Upper lobe of right lung (tissue), 1 donor: ENCODE measurements at regions of chr11 and their contacts with region 1.

Region 1: DNA sequence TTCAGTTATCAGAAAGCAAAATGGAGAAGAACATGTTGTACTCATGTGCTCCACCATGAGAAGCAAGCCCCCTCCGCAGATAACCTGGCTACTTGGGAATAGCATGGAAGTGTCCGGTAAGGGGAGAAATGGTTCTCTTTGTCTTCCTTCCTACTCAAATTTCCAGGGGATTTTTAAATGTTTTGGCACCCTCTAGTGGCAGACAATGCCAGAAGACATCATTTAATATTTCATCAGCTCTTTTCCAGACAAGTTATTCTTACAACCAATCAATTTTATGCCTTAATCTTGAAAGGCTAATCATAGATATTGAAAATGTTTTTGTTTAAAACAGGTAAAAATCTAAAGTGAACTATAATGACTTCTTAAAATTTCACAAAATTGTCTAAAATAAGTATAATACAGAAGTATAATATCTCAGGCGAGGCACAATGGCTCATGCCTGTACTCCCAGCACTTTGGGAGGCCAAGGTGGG is 15.7 kb downstream of the CRTAM start:
- DNase-seq: no peak
- ATAC-seq: peak; percentile 57
- H3K4me3 ChIP-seq: no peak overlapping the region
- H3K27ac ChIP-seq: no peak overlapping the region
- H3K4me1 ChIP-seq: no peaks in the 10 kb centered on the region
- H3K27me3 ChIP-seq: no peaks in the 10 kb centered on the region
- CTCF ChIP-seq: peak; percentile 80

Region 2: DNA sequence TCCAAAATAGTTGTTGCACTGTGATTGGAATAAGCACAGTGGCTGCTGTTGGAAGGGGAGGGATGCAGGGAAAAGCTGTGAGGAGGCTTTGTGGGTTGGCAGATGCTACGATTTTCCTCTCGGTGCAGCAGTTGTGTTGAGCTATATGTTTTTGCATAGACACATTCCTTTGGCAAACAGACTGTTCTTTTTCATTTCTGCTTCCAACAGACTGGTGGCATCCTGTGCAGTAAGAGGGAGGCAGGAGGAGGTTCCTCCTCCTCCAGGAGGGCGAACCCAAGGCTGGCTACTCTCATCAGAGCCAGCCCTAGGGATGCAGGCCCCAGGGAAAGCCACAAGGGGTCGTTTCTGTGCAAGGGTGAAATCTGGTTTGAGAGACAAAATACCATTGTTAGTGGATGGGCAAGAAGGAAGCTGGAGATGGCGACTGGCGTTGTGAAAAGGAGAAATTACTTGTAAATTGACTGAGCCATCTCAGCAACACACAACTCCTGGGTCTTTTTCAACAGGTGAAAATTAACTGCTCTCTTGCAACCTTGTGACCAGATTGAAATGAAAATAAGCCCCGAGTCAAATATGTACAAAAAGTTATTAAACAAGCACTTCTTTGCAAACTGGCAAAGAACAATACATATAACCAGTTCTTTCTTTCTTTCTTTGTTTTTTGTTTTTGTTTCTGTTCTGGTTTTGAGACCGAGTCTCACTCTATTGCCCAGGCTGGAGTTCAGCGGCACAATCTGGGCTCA is 225.0 kb before region 1 on chr11:
- intact Hi-C with region 1: loop called (anchors 10 kb)
- DNase-seq: peak; percentile 76
- ATAC-seq: peak; percentile 96
- H3K4me3 ChIP-seq: no peak overlapping the region
- H3K27ac ChIP-seq: no peak overlapping the region
- H3K4me1 ChIP-seq: peaks cover 4% of the 10 kb centered on the region
- H3K27me3 ChIP-seq: peaks cover 8% of the 10 kb centered on the region
- CTCF ChIP-seq: peak; percentile 85

Region 3: DNA sequence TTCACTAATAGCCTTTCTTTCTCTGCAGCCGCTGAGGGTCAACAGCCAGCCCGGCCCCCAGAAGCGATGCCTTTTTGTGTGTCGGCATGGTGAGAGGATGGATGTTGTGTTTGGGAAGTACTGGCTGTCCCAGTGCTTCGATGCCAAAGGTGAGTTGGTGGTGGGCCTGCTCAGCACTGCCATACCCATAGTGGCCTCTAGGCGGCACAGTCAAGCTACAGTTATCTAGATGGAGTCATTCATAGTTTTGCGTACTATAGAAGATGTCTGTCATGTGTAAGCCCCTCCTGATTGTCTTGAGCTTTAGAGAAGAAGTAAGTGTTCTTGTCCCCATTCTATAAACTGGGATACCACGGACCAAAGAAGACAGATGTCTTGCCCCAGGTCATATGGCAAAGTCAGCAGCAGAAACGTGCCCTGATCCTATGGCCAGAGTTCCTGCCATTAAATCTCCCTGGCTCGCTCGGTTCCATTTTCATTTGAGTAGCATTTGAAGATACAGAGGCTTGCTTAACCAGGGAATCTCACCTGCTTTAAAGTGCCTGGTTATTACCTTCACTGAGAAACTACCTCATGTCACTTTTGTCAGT is 57.8 kb before region 1 on chr11:
- intact Hi-C with region 1: loop called (anchors 10 kb)
- DNase-seq: peak; percentile 73
- ATAC-seq: peak; percentile 90
- H3K4me3 ChIP-seq: no peak overlapping the region
- H3K27ac ChIP-seq: no peak overlapping the region
- H3K4me1 ChIP-seq: peaks cover 7% of the 10 kb centered on the region
- H3K27me3 ChIP-seq: no peaks in the 10 kb centered on the region
- CTCF ChIP-seq: peak; percentile 90

Region 4: GRCh38 chr11:123054301-123055065 is 200.5 kb after region 1 on chr11:
- intact Hi-C with region 1: no loop called
- DNase-seq: no peak
- ATAC-seq: peak; percentile 95
- H3K4me3 ChIP-seq: no peak overlapping the region
- H3K27ac ChIP-seq: no peak overlapping the region
- H3K4me1 ChIP-seq: peaks cover 24% of the 10 kb centered on the region
- H3K27me3 ChIP-seq: no peaks in the 10 kb centered on the region
- CTCF ChIP-seq: peak; percentile 74

Region 5: DNA sequence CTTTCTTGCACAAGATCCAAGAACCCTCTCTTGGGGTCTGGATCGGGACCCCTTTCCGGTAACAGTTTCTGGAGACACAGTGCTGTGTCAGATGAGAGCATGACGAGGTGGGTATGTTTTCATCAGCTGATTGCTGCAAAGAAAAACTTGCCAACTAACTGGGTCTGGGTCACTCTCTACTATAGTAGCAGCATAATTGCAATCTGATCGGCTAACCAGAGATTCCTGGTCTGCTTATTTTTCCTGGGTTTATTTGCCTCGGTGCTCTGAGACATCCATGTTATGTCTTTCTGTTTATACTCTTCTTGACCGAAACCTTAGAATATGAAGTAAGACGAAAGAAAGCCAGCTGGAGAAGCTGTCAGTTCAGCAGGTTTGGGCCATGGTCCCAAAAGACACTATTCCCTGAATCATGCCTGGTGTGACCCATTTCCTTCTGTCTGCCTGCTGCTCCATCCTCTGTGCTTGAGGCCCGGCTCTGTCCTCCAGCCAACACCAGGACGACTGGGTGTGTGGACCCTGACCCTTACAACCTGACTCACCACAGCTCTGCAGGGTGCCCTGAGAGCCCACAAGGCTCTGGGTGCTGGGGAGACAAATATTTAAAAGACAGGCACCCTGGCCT is 365.2 kb after region 1 on chr11:
- intact Hi-C with region 1: no loop called
- DNase-seq: no peak
- ATAC-seq: no peak
- H3K4me3 ChIP-seq: no peak overlapping the region
- H3K27ac ChIP-seq: peak overlapping the region; percentile 55
- H3K4me1 ChIP-seq: no peaks in the 10 kb centered on the region
- H3K27me3 ChIP-seq: no peaks in the 10 kb centered on the region
- CTCF ChIP-seq: no peak